ENCODE measurements at regions of chr19 and their contacts with region 1.

Region 1: GRCh38 chr19:55454787-55455243 is 6.6 kb downstream of the ISOC2 start:
- DNase-seq: peak in 13 of 14 experiments; percentile 23 to 73 (median 46)
- ATAC-seq: peak; percentile 41
- H3K4me3 ChIP-seq: no peak overlapping the region
- H3K4me3 Mint-ChIP-seq: peak overlapping the region; percentile 77
- H3K27ac ChIP-seq: no peak overlapping the region
- H3K27ac Mint-ChIP-seq: no peak overlapping the region
- H3K4me1 ChIP-seq: peaks cover 23% of the 10 kb centered on the region
- H3K4me1 Mint-ChIP-seq: peaks cover 13% of the 10 kb centered on the region
- H3K27me3 ChIP-seq: peaks cover 17 to 20% of the 10 kb centered on the region in 2 experiments
- H3K27me3 Mint-ChIP-seq: peaks cover 33% of the 10 kb centered on the region
- CTCF ChIP-seq: peak; percentile 54

Region 2: DNA sequence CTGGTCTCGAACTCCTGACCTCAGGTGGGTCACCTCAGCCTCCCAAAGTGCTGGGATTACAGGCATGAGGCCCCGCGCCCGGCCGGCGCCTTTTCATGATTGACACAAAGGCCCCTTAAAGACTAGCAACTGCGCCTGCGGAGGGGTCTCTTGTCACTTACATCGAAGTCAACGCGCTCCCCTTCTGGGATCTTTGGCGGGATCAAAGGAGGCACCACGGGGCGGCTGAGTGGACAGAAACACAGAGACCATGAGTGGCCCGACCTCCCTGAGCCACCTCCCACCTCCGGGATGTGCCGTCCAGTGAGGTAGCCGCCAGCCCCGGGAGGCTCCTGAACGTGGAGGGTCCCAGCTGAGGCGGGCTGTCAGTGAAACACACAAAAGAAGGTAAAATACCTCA is 313.1 kb before region 1 on chr19:
- CTCF ChIA-PET with region 1: no interaction called
- POLR2A ChIA-PET with region 1: no interaction called
- intact Hi-C with region 1: loop called in 1 of 2 experiments (anchors 1 kb)
- DNase-seq: no peak
- ATAC-seq: no peak
- H3K4me3 ChIP-seq: no peak overlapping the region
- H3K4me3 Mint-ChIP-seq: no peak overlapping the region
- H3K27ac ChIP-seq: no peak overlapping the region
- H3K27ac Mint-ChIP-seq: no peak overlapping the region
- H3K4me1 ChIP-seq: peaks cover 20% of the 10 kb centered on the region
- H3K4me1 Mint-ChIP-seq: peaks cover 5% of the 10 kb centered on the region
- H3K27me3 ChIP-seq: peaks cover 50 to 58% of the 10 kb centered on the region in 2 experiments
- H3K27me3 Mint-ChIP-seq: peaks cover 59% of the 10 kb centered on the region
- CTCF ChIP-seq: no peak

Region 3: GRCh38 chr19:55301459-55302317 is 153.1 kb before region 1 on chr19:
- CTCF ChIA-PET with region 1: no interaction called
- POLR2A ChIA-PET with region 1: no interaction called
- intact Hi-C with region 1: loop called in 1 of 2 experiments (anchors 1 kb)
- DNase-seq: peak; percentile 87 to 98 (median 94)
- ATAC-seq: peak; percentile 89
- H3K4me3 ChIP-seq: peak overlapping the region; percentile 37
- H3K4me3 Mint-ChIP-seq: peak overlapping the region; percentile 88
- H3K27ac ChIP-seq: no peak overlapping the region
- H3K27ac Mint-ChIP-seq: peak overlapping the region; percentile 61
- H3K4me1 ChIP-seq: peaks cover 21% of the 10 kb centered on the region
- H3K4me1 Mint-ChIP-seq: peaks cover 14% of the 10 kb centered on the region
- H3K27me3 ChIP-seq: no peaks in the 10 kb centered on the region
- H3K27me3 Mint-ChIP-seq: no peaks in the 10 kb centered on the region
- CTCF ChIP-seq: peak; percentile 95